ENCODE measurements at regions of chr10 and their contacts with region 1.

Region 1: GRCh38 chr10:18659120-18659818 is at the start of gene ARL5B:
- DNase-seq: peak; percentile 99
- ATAC-seq: peak; percentile 96
- H3K4me3 ChIP-seq: peak within 1 kb of the TSS; percentile 93 to 96 (median 94)
- H3K4me3 Mint-ChIP-seq: peak within 1 kb of the TSS; percentile 100
- H3K27ac ChIP-seq: peak within 1 kb of the TSS; percentile 99
- H3K27ac Mint-ChIP-seq: peak within 1 kb of the TSS; percentile 99
- H3K4me1 ChIP-seq: peaks cover 25 to 27% of the 10 kb centered on the region in 2 donors
- H3K4me1 Mint-ChIP-seq: peaks cover 40% of the 10 kb centered on the region
- H3K27me3 ChIP-seq: no peaks in the 10 kb centered on the region
- H3K27me3 Mint-ChIP-seq: no peaks in the 10 kb centered on the region
- CTCF ChIP-seq: no peak
- total RNA-seq, gene ARL5B: 12.2 and 13.4 TPM in 2 replicates

Region 2: GRCh38 chr10:17200912-17201793 is 1458.1 kb before region 1 on chr10 and contains the start of gene TRDMT1:
- CTCF ChIA-PET with region 1: no interaction called
- POLR2A ChIA-PET with region 1: interaction called, 5 read pairs
- intact Hi-C with region 1: loop called (anchors 10 kb)
- DNase-seq: peak; percentile 89
- ATAC-seq: peak; percentile 91
- H3K4me3 ChIP-seq: peak within 1 kb of the TSS; percentile 43 to 95 (median 70)
- H3K4me3 Mint-ChIP-seq: peak within 1 kb of the TSS; percentile 97
- H3K27ac ChIP-seq: peak within 1 kb of the TSS; percentile 56 to 89
- H3K27ac Mint-ChIP-seq: peak within 1 kb of the TSS; percentile 97
- H3K4me1 ChIP-seq: peaks cover 13 to 17% of the 10 kb centered on the region in 2 donors
- H3K4me1 Mint-ChIP-seq: peaks cover 27% of the 10 kb centered on the region
- H3K27me3 ChIP-seq: no peaks in the 10 kb centered on the region
- H3K27me3 Mint-ChIP-seq: no peaks in the 10 kb centered on the region
- CTCF ChIP-seq: no peak
- total RNA-seq, gene TRDMT1: 20.4 and 24.5 TPM in 2 replicates

Measured in B cell (primary cell).